ENCODE measurements at regions of chr2 and their contacts with region 1.

Region 1: GRCh38 chr2:10408649-10409579 is 39.2 kb downstream of the ODC1 start:
- DNase-seq: peak; percentile 91 to 95
- H3K4me3 ChIP-seq: no peak overlapping the region
- H3K4me3 Mint-ChIP-seq: peak overlapping the region; percentile 47
- H3K27ac Mint-ChIP-seq: peak overlapping the region; percentile 65
- H3K4me1 ChIP-seq: peaks cover 13% of the 10 kb centered on the region
- H3K4me1 Mint-ChIP-seq: peaks cover 20% of the 10 kb centered on the region
- H3K27me3 ChIP-seq: no peaks in the 10 kb centered on the region
- H3K27me3 Mint-ChIP-seq: no peaks in the 10 kb centered on the region
- CTCF ChIP-seq: peak; percentile 96 to 97

Region 2: GRCh38 chr2:10072656-10073480 is 336.0 kb before region 1 on chr2:
- CTCF ChIA-PET with region 1: interaction called, 24 read pairs
- POLR2A ChIA-PET with region 1: no interaction called
- intact Hi-C with region 1: no loop called
- DNase-seq: peak; percentile 90
- H3K4me3 ChIP-seq: no peak overlapping the region
- H3K4me3 Mint-ChIP-seq: no peak overlapping the region
- H3K27ac Mint-ChIP-seq: no peak overlapping the region
- H3K4me1 ChIP-seq: no peaks in the 10 kb centered on the region; the same call in 1 of the 2 replicates
- H3K4me1 Mint-ChIP-seq: peaks cover 6% of the 10 kb centered on the region
- H3K27me3 ChIP-seq: no peaks in the 10 kb centered on the region
- H3K27me3 Mint-ChIP-seq: peaks cover 15% of the 10 kb centered on the region
- CTCF ChIP-seq: peak; percentile 91 to 92

Region 3: DNA sequence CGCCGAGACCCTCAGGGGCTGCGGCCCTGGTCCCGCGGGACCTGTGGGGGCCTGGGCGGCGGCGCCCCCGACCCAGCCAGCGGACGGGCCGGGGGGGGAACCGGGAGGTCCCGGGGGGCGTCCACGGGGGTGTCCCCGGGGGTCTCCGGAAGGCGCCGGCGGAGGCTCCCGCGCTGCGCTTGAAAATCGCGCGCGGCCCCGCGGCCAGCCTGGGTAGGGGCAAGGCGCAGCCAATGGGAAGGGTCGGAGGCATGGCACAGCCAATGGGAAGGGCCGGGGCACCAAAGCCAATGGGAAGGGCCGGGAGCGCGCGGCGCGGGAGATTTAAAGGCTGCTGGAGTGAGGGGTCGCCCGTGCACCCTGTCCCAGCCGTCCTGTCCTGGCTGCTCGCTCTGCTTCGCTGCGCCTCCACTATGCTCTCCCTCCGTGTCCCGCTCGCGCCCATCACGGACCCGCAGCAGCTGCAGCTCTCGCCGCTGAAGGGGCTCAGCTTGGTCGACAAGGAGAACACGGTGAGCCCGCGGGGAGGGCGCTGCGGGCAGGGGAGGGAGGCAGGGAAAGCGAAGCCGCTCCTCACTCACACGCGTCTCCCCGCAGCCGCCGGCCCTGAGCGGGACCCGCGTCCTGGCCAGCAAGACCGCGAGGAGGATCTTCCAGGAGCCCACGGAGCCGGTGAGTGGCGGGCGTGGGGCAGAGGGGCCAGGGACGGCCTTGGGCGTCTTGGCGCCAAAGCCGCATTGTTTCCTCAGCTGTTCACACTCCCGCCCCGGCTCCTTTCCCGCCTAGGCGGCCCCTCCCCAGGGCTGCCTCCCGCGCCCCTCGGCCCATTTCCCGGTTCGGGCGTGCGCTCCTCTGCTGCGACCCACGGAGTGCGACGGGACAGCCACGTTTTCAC is 286.3 kb before region 1 on chr2 and contains the start of gene RRM2:
- CTCF ChIA-PET with region 1: interaction called, 44 read pairs
- POLR2A ChIA-PET with region 1: interaction called, 3 read pairs
- intact Hi-C with region 1: loop called (anchors 1 kb)
- DNase-seq: peak; percentile 98
- H3K4me3 ChIP-seq: peak within 1 kb of the TSS; percentile 66
- H3K4me3 Mint-ChIP-seq: peak within 1 kb of the TSS; percentile 96
- H3K27ac Mint-ChIP-seq: peak within 1 kb of the TSS; percentile 96
- H3K4me1 ChIP-seq: peaks cover 11% of the 10 kb centered on the region
- H3K4me1 Mint-ChIP-seq: peaks cover 13% of the 10 kb centered on the region
- H3K27me3 ChIP-seq: no peaks in the 10 kb centered on the region
- H3K27me3 Mint-ChIP-seq: no peaks in the 10 kb centered on the region
- CTCF ChIP-seq: no peak
- total RNA-seq, gene RRM2: 160 and 169 TPM in 2 replicates

Region 4: GRCh38 chr2:10162586-10163497 is 246.1 kb before region 1 on chr2:
- CTCF ChIA-PET with region 1: interaction called, 18 read pairs
- POLR2A ChIA-PET with region 1: no interaction called
- intact Hi-C with region 1: no loop called
- DNase-seq: peak in 1 of 2 experiments; percentile 72
- H3K4me3 ChIP-seq: no peak overlapping the region
- H3K4me3 Mint-ChIP-seq: no peak overlapping the region
- H3K27ac Mint-ChIP-seq: no peak overlapping the region
- H3K4me1 ChIP-seq: peaks cover 8% of the 10 kb centered on the region
- H3K4me1 Mint-ChIP-seq: peaks cover 7% of the 10 kb centered on the region
- H3K27me3 ChIP-seq: no peaks in the 10 kb centered on the region
- H3K27me3 Mint-ChIP-seq: no peaks in the 10 kb centered on the region
- CTCF ChIP-seq: peak; percentile 42 to 47

Region 5: DNA sequence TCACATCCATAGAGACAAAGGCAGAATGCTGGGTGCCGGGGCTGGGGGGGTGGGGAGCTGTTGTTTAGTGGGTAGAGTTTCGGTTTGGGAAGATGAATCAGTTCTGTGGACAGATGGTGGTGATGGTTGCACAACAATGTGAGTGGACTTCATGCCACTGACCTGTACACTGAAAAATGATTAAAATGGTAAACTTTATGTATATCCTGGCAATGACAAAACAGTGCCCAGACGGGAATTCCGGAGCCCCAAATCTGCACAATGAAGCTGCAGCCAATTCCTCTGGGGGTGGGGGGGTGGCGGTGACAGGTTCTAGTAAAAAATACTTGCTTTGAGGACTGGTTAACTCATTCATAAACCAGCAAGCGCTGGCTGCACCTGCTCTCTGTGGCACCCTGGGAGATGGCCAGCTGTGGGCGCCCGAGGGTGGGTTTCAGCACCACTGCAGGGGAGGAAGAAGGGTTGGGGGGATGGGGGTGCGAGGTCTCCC is 188.0 kb before region 1 on chr2:
- CTCF ChIA-PET with region 1: interaction called, 28 read pairs
- POLR2A ChIA-PET with region 1: no interaction called
- intact Hi-C with region 1: loop called (anchors 2 kb)
- DNase-seq: no peak
- H3K4me3 ChIP-seq: no peak overlapping the region
- H3K4me3 Mint-ChIP-seq: no peak overlapping the region
- H3K27ac Mint-ChIP-seq: no peak overlapping the region
- H3K4me1 ChIP-seq: peaks cover 17% of the 10 kb centered on the region
- H3K4me1 Mint-ChIP-seq: peaks cover 26% of the 10 kb centered on the region
- H3K27me3 ChIP-seq: no peaks in the 10 kb centered on the region
- H3K27me3 Mint-ChIP-seq: no peaks in the 10 kb centered on the region
- CTCF ChIP-seq: no peak

Region 6: DNA sequence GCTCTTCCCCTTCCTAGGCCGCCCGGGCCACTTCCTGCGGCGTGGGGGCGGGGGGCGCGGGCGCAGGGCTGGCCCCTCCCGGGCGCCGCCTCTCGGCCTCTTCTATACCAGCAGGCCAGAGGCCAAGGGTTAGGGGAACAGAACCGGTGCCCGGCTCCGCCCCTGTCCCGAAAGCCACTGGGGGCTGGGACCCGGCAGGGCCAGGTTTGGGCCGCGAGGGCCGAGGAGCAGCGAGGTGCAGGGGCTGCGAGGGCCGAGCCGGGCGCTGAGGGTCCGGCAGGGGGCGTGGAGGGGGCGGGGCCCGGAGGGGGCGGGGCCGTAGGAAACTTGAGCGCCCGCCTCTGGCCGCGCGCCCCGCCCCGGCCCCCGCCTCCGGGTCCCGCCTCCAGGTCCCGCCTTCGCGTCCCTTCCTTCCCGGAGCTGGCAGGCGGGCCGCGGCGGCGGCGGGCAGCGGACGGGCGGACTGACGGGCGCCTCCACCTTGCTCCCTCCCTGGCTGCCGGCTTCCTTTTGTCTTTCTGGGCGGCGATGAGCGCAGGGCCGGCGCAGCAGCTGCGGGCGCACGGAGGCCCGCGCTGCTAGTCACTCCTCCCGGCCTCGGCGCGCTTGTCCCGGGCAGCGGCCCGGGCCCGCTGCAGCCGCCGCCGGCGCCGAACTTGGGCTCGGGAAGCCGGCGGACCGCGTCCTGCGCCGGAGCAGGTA is 106.3 kb before region 1 on chr2 and contains the start of gene HPCAL1:
- CTCF ChIA-PET with region 1: interaction called, 48 read pairs
- POLR2A ChIA-PET with region 1: interaction called, 3 read pairs
- intact Hi-C with region 1: loop called (anchors 1 kb)
- DNase-seq: peak; percentile 96 to 98
- H3K4me3 ChIP-seq: peak within 1 kb of the TSS; percentile 99
- H3K4me3 Mint-ChIP-seq: peak within 1 kb of the TSS; percentile 94
- H3K27ac Mint-ChIP-seq: peak within 1 kb of the TSS; percentile 60
- H3K4me1 ChIP-seq: peaks cover 23% of the 10 kb centered on the region
- H3K4me1 Mint-ChIP-seq: peaks cover 20% of the 10 kb centered on the region
- H3K27me3 ChIP-seq: no peaks in the 10 kb centered on the region
- H3K27me3 Mint-ChIP-seq: no peaks in the 10 kb centered on the region
- CTCF ChIP-seq: peak; percentile 66 to 83
- total RNA-seq, gene HPCAL1: 26.3 and 26.9 TPM in 2 replicates

Region 7: DNA sequence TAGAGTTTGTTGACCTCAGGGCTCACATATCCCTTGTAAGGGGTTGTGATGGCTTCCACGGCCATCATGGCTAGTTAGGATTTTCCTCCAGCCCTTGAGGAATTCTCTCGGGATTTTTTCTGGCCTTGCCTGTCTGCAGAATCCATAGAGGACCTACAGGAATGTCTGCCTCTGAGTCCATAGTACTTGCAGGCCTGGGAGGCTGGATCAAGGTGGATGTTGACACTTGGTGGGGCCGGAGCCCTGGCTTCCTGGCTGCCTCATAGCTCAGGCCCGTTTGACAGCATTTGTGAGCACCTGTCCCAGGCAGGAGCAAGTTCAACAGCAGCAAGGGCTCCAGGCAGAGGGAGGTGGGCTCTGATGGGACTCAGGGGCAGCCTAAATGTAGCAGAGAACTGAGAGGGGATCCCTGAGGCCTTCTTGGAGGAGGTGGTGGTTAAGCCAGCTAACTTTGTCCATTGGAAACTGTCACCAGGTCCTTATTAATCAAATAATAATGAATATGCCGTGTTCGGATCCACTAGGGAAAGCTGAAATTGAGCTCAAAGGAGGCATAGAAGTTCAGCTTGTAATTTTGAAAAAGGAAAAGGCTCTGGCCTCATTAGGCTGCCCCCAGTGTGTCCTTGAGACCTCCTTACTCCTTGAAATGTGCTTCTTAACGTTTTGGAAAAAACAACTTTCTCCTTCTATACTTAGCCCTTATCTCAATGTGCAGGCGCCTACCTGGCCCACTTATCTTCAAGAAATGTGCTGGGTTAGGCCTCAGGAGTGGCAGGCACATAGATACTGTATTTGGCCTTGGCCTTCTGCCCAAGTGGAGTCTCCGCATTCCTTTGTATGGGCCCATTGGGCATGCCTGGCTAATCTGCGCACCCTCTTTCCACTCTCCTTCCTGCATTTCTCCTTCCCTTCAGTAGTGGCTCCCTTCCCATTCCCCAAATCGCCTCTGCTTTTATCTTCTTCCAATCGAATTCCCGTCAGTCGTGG is 39.4 kb before region 1 on chr2:
- CTCF ChIA-PET with region 1: interaction called, 11 read pairs
- POLR2A ChIA-PET with region 1: no interaction called
- intact Hi-C with region 1: loop called (anchors 1 kb)
- DNase-seq: peak; percentile 62 to 72
- H3K4me3 ChIP-seq: no peak overlapping the region
- H3K4me3 Mint-ChIP-seq: no peak overlapping the region
- H3K27ac Mint-ChIP-seq: peak overlapping the region; percentile 65
- H3K4me1 ChIP-seq: peaks cover 12% of the 10 kb centered on the region
- H3K4me1 Mint-ChIP-seq: peaks cover 14% of the 10 kb centered on the region
- H3K27me3 ChIP-seq: no peaks in the 10 kb centered on the region
- H3K27me3 Mint-ChIP-seq: no peaks in the 10 kb centered on the region
- CTCF ChIP-seq: no peak

Region 8: DNA sequence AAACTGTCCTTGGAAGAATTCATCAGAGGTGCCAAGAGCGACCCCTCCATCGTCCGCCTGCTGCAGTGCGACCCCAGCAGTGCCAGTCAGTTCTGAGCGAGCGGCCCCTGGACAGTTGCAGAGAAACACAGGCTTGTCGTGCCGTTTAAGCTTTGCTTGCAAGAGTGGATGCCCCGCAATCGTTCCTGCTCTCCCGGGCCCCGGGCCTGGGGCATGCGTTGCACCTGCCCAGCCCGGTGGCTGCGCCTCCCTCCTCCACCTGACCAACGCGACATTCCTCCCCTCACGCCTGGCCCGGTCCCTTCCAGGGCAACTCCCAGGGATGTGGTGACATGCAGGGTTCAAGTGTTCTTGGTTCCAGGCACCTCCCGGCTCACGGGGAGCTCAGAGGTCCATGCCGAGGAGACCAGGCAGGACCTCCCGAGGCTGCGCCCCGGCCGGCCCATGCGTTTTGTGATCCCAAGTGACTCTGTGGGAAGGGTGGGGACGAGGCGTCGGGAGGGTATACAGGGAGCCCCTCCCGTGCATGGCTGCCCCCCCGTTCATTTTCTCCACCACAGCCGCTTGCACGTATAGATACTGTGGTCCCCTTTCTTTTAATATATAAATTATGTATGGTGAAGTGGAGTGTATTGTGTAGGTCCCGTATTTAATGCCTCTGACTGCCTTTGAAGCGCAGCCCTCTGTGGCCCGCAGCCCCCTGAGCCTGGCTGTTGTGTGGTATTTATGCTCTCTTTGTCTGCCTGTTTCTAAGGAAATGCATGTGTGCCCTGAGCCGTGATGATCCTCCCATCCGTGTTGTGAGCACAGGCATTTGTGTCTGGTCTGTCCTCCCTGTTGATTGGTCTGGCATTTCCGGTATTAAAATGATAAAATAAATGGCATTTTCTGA is 18.1 kb after region 1 on chr2:
- CTCF ChIA-PET with region 1: no interaction called
- POLR2A ChIA-PET with region 1: no interaction called
- intact Hi-C with region 1: no loop called
- DNase-seq: no peak
- H3K4me3 ChIP-seq: no peak overlapping the region
- H3K4me3 Mint-ChIP-seq: no peak overlapping the region
- H3K27ac Mint-ChIP-seq: no peak overlapping the region
- H3K4me1 ChIP-seq: no peaks in the 10 kb centered on the region
- H3K4me1 Mint-ChIP-seq: no peaks in the 10 kb centered on the region
- H3K27me3 ChIP-seq: no peaks in the 10 kb centered on the region
- H3K27me3 Mint-ChIP-seq: no peaks in the 10 kb centered on the region
- CTCF ChIP-seq: no peak

Region 9: GRCh38 chr2:10457911-10458604 is 49.1 kb after region 1 on chr2:
- CTCF ChIA-PET with region 1: no interaction called
- POLR2A ChIA-PET with region 1: no interaction called
- intact Hi-C with region 1: no loop called
- DNase-seq: no peak
- H3K4me3 ChIP-seq: no peak overlapping the region
- H3K4me3 Mint-ChIP-seq: no peak overlapping the region
- H3K27ac Mint-ChIP-seq: no peak overlapping the region
- H3K4me1 ChIP-seq: peaks cover 7% of the 10 kb centered on the region; the same call in 1 of the 2 replicates
- H3K4me1 Mint-ChIP-seq: peaks cover 11% of the 10 kb centered on the region
- H3K27me3 ChIP-seq: no peaks in the 10 kb centered on the region
- H3K27me3 Mint-ChIP-seq: no peaks in the 10 kb centered on the region
- CTCF ChIP-seq: no peak

Region 10: GRCh38 chr2:10533811-10534321 is 125.0 kb after region 1 on chr2:
- CTCF ChIA-PET with region 1: no interaction called
- POLR2A ChIA-PET with region 1: no interaction called
- intact Hi-C with region 1: no loop called
- DNase-seq: peak in 1 of 2 experiments; percentile 24
- H3K4me3 ChIP-seq: no peak overlapping the region
- H3K4me3 Mint-ChIP-seq: no peak overlapping the region
- H3K27ac Mint-ChIP-seq: no peak overlapping the region
- H3K4me1 ChIP-seq: no peaks in the 10 kb centered on the region
- H3K4me1 Mint-ChIP-seq: no peaks in the 10 kb centered on the region
- H3K27me3 ChIP-seq: no peaks in the 10 kb centered on the region
- H3K27me3 Mint-ChIP-seq: no peaks in the 10 kb centered on the region
- CTCF ChIP-seq: no peak

Region 11: DNA sequence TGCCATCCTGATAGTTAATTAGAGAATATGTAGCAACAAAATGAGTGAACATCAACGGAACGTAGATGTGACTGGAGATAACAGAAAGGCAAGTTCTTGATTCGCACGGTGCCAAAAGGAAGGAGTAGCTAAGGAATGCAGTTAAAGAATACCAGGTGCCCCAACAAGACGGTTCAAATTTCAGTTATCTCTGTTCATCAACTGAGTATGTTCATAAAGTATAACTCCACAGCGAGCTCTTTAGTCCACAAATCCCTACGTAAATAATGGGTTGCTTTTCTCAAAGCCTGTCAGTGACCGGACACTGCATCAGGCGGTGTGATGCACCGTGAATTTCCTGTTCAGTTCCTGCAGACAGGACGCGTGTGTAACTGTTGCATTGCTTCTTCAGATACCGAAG is 189.0 kb after region 1 on chr2:
- CTCF ChIA-PET with region 1: no interaction called
- POLR2A ChIA-PET with region 1: no interaction called
- intact Hi-C with region 1: no loop called
- DNase-seq: peak in 1 of 2 experiments; percentile 34
- H3K4me3 ChIP-seq: no peak overlapping the region
- H3K4me3 Mint-ChIP-seq: peak overlapping the region; percentile 39
- H3K27ac Mint-ChIP-seq: peak overlapping the region; percentile 72
- H3K4me1 ChIP-seq: peaks cover 46% of the 10 kb centered on the region
- H3K4me1 Mint-ChIP-seq: peaks cover 33% of the 10 kb centered on the region
- H3K27me3 ChIP-seq: no peaks in the 10 kb centered on the region
- H3K27me3 Mint-ChIP-seq: no peaks in the 10 kb centered on the region
- CTCF ChIP-seq: no peak